GM12878 (cell line): ENCODE measurements at regions of chr2 and their contacts with region 1.

Region 1: DNA sequence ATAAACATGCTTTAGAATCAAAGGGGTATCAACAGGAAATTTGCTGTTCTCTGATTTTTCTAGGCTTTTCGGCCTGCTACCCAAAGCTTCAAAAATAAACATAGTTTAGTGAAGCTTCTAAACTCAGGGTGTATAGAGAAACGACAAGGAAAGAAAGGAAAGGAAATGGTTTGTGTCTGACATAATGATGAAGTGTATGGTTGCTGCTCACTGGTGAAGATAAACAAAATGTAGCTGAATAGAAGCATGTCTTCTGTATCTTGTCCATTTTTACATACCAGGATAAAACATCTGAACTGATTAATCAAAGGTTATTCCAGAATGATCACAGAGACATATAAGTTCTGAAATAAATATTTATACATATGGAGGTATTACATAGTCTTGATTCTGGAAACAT is 1324.6 kb upstream of the NRXN1 start:
- DNase-seq: no peak
- ATAC-seq: no peak
- H3K4me3 ChIP-seq: no peak overlapping the region
- H3K27ac ChIP-seq: no peak overlapping the region
- H3K4me1 ChIP-seq: no peaks in the 10 kb centered on the region
- H3K27me3 ChIP-seq: no peaks in the 10 kb centered on the region
- CTCF ChIP-seq: no peak
- EP300 ChIP-seq: no peak
- POLR2A ChIP-seq: no peak
- RAD21 ChIP-seq: no peak

Region 2: GRCh38 chr2:51722311-51722710 is 634.2 kb before region 1 on chr2:
- CTCF ChIA-PET with region 1: no interaction called
- POLR2A ChIA-PET with region 1: no interaction called
- RAD21 ChIA-PET with region 1: no interaction called
- SMC1A ChIA-PET with region 1: no interaction called
- in situ Hi-C with region 1: no loop called
- intact Hi-C with region 1: no loop called
- DNase-seq: no peak
- ATAC-seq: no peak
- H3K4me3 ChIP-seq: no peak overlapping the region
- H3K27ac ChIP-seq: no peak overlapping the region
- H3K4me1 ChIP-seq: no peaks in the 10 kb centered on the region
- H3K27me3 ChIP-seq: no peaks in the 10 kb centered on the region
- CTCF ChIP-seq: no peak
- EP300 ChIP-seq: no peak
- POLR2A ChIP-seq: no peak
- RAD21 ChIP-seq: no peak

Region 3: DNA sequence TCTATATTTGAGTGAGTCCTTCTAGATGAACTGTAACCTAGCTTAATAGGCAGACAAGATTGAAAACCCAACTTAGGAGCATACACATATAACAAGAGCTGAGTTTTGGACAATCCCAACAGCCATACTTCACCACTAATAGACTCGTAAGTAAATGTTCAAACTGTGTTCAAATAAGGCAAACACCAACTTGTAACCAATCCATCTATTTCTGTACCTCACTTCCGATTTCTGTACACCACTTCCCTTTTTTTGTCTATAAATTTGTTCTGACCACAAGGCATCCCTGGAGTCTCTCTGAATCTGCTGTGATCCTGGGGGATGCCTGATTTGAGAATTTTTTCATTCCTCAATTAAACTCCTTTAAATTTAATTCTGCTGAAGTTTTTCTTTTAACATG is 175.5 kb before region 1 on chr2:
- CTCF ChIA-PET with region 1: no interaction called
- POLR2A ChIA-PET with region 1: no interaction called
- RAD21 ChIA-PET with region 1: no interaction called
- SMC1A ChIA-PET with region 1: no interaction called
- in situ Hi-C with region 1: no loop called
- intact Hi-C with region 1: no loop called
- DNase-seq: no peak
- ATAC-seq: no peak
- H3K4me3 ChIP-seq: no peak overlapping the region
- H3K27ac ChIP-seq: no peak overlapping the region
- H3K4me1 ChIP-seq: no peaks in the 10 kb centered on the region
- H3K27me3 ChIP-seq: no peaks in the 10 kb centered on the region
- CTCF ChIP-seq: no peak
- EP300 ChIP-seq: no peak
- POLR2A ChIP-seq: no peak
- RAD21 ChIP-seq: no peak

Region 4: DNA sequence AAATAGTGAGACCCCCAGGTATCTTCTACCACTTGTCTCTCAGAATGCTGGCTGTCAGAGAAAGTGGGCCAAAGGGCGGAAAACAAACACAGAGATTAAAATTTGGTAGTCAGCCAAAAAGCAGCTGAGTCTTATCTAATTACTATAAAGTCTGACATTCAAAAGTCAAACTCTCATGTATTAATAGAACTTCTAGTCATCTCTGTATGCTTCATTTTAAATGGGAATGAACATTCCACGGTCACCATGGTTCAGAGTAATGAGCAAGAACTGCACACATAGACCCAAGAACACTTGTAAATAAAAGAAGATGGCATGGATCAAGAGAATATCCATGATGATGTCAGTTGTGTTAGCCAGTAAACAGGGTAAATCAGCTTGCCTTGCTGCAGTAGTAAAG is 144.0 kb after region 1 on chr2:
- CTCF ChIA-PET with region 1: no interaction called
- POLR2A ChIA-PET with region 1: no interaction called
- RAD21 ChIA-PET with region 1: no interaction called
- SMC1A ChIA-PET with region 1: no interaction called
- in situ Hi-C with region 1: no loop called
- intact Hi-C with region 1: no loop called
- DNase-seq: no peak
- ATAC-seq: no peak
- H3K4me3 ChIP-seq: no peak overlapping the region
- H3K27ac ChIP-seq: no peak overlapping the region
- H3K4me1 ChIP-seq: no peaks in the 10 kb centered on the region
- H3K27me3 ChIP-seq: no peaks in the 10 kb centered on the region
- CTCF ChIP-seq: no peak
- EP300 ChIP-seq: no peak
- POLR2A ChIP-seq: no peak
- RAD21 ChIP-seq: no peak

Region 5: GRCh38 chr2:53670331-53670730 is 1313.8 kb after region 1 on chr2:
- CTCF ChIA-PET with region 1: no interaction called
- POLR2A ChIA-PET with region 1: interaction called, 12 read pairs
- RAD21 ChIA-PET with region 1: no interaction called
- SMC1A ChIA-PET with region 1: no interaction called
- in situ Hi-C with region 1: no loop called
- intact Hi-C with region 1: no loop called
- DNase-seq: no peak
- ATAC-seq: no peak
- H3K4me3 ChIP-seq: no peak overlapping the region
- H3K27ac ChIP-seq: no peak overlapping the region
- H3K4me1 ChIP-seq: no peaks in the 10 kb centered on the region
- H3K27me3 ChIP-seq: no peaks in the 10 kb centered on the region
- CTCF ChIP-seq: no peak
- EP300 ChIP-seq: no peak
- POLR2A ChIP-seq: no peak
- RAD21 ChIP-seq: no peak